ENCODE measurements at regions of chr12 and their contacts with region 1.

Region 1: DNA sequence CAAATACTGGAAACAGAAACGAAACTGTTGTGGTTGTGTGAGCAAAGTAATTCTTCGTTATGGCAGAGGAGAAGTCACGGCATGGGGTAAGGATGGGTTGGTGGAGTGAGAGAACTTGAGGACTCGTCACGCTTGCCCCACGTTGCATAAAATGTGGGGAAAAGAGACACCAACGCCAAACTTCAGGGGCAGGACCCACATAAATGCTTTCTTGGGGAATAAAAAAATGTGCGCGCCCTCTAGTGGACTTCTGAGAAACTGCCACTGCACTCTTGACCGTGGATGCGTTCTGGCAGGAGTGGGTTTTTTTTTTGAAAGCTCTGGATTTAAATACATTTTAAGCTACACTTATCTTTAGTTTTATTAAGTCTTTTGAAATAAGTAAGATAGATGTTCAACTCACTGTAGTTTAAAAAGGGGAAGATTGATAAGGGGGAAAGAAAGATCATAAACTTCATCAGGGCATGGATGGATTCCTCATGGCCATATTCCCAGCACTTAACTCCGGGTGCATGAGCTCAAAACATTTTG is 4.1 kb upstream of the IGF1 start:
- DNase-seq: peak; percentile 65
- H3K4me3 ChIP-seq: peak overlapping the region in 1 of 3 experiments; percentile 35
- H3K27ac ChIP-seq: no peak overlapping the region
- H3K4me1 ChIP-seq: peaks cover 12% of the 10 kb centered on the region
- H3K27me3 ChIP-seq: no peaks in the 10 kb centered on the region
- CTCF ChIP-seq: peak; percentile 83 to 89
- POLR2A ChIP-seq: no peak

Region 2: GRCh38 chr12:101919447-101919846 is 565.0 kb before region 1 on chr12:
- CTCF ChIA-PET with region 1: no interaction called
- POLR2A ChIA-PET with region 1: no interaction called
- dilution Hi-C with region 1: no loop called
- intact Hi-C with region 1: loop called (anchors 1 kb)
- DNase-seq: no peak
- H3K4me3 ChIP-seq: no peak overlapping the region
- H3K27ac ChIP-seq: no peak overlapping the region
- H3K4me1 ChIP-seq: no peaks in the 10 kb centered on the region
- H3K27me3 ChIP-seq: no peaks in the 10 kb centered on the region
- CTCF ChIP-seq: no peak
- POLR2A ChIP-seq: no peak

Region 3: DNA sequence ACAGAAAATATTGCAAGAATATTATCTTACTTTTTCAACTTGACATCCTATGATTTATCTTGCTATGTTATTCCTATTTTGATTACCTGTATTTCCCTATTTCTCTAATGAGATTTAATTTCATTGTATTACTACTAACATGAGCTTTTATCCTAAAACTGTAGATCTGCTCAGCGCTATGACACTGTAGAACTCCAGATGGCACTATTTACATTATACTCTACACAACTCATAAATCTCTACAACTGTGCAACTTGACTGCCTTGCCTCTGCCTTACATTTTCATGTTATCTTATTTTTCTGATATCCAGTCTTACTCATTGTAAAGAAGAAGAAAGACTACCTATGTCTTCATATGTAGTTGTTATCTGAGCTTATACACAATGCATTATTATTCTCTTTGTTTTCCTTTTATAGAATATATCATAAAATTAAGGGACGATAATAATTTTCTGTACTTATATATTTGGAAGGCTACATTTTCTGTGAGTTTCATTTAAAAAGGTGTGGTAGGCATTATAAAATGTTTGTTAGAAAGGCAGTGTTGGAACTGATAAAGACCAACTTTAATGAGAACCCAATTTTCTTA is 388.7 kb before region 1 on chr12:
- CTCF ChIA-PET with region 1: interaction called, 100 read pairs
- POLR2A ChIA-PET with region 1: no interaction called
- dilution Hi-C with region 1: no loop called
- intact Hi-C with region 1: loop called (anchors 1 kb)
- DNase-seq: peak; percentile 50
- H3K4me3 ChIP-seq: no peak overlapping the region
- H3K27ac ChIP-seq: no peak overlapping the region
- H3K4me1 ChIP-seq: no peaks in the 10 kb centered on the region
- H3K27me3 ChIP-seq: no peaks in the 10 kb centered on the region
- CTCF ChIP-seq: peak; percentile 31 to 38
- POLR2A ChIP-seq: no peak

Region 4: DNA sequence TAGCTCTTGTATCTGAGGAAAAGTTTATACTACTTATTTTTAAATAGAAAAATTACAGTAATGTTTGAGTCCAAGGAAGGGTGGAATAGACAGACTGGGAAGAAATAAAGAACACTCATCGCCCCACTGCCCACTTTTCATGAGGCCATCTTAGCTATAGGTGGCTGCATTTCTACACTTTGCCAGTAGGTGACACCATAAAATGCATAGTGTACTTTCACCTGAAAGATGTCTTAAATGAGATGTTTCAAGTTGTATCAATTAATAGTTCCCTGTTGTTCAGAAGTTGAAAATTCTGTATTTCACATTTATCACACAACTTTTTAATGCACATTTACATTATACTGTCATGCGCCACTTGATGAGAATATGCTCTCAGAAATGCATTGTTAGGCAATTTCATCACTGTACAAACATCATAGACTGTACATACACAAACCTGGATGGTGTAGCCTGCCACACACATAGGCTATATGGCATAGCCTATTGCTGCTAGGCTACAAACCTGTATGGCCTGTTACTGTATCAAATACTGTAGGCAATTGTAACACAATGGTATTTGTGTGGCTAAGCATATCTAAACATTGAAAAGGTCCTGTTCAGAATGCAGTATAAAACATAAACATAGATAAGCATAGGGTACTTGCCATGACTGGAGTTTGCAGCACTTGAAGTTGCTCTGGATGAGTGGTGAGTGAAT is 314.4 kb before region 1 on chr12:
- CTCF ChIA-PET with region 1: interaction called, 103 read pairs
- POLR2A ChIA-PET with region 1: no interaction called
- dilution Hi-C with region 1: no loop called
- intact Hi-C with region 1: loop called (anchors 1 kb)
- DNase-seq: peak; percentile 69
- H3K4me3 ChIP-seq: no peak overlapping the region
- H3K27ac ChIP-seq: no peak overlapping the region
- H3K4me1 ChIP-seq: peaks cover 26% of the 10 kb centered on the region
- H3K27me3 ChIP-seq: no peaks in the 10 kb centered on the region
- CTCF ChIP-seq: peak; percentile 62 to 64
- POLR2A ChIP-seq: no peak

Region 5: GRCh38 chr12:102376181-102376747 is 108.2 kb before region 1 on chr12:
- CTCF ChIA-PET with region 1: no interaction called
- POLR2A ChIA-PET with region 1: no interaction called
- dilution Hi-C with region 1: no loop called
- intact Hi-C with region 1: no loop called
- DNase-seq: no peak
- H3K4me3 ChIP-seq: no peak overlapping the region
- H3K27ac ChIP-seq: no peak overlapping the region
- H3K4me1 ChIP-seq: no peaks in the 10 kb centered on the region
- H3K27me3 ChIP-seq: no peaks in the 10 kb centered on the region
- CTCF ChIP-seq: no peak
- POLR2A ChIP-seq: no peak

Region 6: DNA sequence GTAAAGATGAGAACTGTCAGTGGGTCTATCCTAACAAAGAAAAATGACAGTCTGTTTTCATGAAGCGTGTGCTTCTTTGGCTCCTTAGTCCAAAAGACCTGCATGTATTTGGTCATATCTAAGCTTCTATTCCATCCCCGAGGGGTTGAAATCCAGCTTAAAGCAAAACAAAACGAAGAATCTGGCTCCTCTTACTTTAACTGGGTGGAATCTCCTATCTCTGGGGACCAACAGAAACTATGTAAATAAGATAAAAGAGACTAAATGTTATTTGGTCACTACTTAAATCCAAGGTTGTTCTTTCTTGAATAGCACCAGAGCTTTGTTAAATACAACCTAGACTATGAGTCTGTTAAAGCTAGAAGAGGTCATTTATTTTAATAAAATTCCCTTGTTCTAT is 13.5 kb before region 1 on chr12:
- CTCF ChIA-PET with region 1: interaction called, 22 read pairs
- POLR2A ChIA-PET with region 1: no interaction called
- dilution Hi-C with region 1: no loop called
- intact Hi-C with region 1: no loop called
- DNase-seq: no peak
- H3K4me3 ChIP-seq: no peak overlapping the region
- H3K27ac ChIP-seq: no peak overlapping the region
- H3K4me1 ChIP-seq: no peaks in the 10 kb centered on the region
- H3K27me3 ChIP-seq: no peaks in the 10 kb centered on the region
- CTCF ChIP-seq: no peak
- POLR2A ChIP-seq: no peak

Measured in endothelial cell of umbilical vein (primary cell).